Activated CD4-positive, alpha-beta memory T cell treated with anti-CD3 and anti-CD28 coated beads for 36 hours (primary cell): ENCODE measurements at regions of chr10 and their contacts with region 1.

Region 1: DNA sequence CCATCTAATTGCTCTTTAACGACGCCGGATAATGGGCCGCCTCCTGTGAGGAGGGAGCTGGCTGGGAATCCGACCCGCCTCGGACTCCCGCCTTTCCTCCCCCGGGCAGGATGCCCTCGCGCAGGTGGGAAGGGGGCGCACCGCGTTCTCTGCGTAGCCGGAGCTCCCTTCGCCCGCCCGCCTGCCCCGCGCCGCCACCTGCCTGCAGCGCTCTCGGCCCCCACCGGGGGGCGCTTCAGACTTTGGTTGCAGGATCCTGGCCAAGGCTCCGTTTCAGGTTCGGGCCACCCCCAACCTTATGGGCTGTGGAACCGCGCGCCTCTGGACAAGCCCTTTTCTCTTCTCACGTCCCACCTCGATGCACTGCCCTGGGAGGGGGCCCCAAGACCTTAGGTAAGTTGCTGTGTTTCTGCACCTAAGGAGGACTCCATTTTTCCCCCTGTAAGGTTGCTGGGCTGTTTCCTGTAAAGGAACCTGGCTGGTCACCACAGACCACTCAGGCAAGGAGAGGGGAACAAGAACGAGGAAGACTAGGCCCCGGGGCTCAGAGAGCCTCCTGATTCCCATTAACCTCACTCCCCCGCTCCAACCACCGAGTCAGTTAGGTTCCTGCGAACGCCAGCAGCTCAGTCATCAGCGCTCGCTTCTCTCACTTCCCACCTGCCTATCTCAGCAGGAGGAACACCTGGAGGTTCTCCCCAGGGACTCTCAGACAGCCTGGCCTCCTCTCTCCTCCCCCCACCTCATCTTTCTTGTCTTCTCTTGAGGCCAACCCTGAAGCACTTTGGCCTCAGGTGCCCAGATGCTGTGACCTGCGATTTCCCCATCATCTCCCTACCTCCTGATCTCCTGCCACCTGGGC is 11.3 kb upstream of the KAZALD1 start:
- DNase-seq: peak; percentile 84
- H3K4me3 Mint-ChIP-seq: no peak overlapping the region
- H3K27ac Mint-ChIP-seq: no peak overlapping the region
- H3K4me1 Mint-ChIP-seq: peaks cover 15% of the 10 kb centered on the region
- H3K27me3 Mint-ChIP-seq: peaks cover 47% of the 10 kb centered on the region

Region 2: GRCh38 chr10:100728928-100729861 is 321.2 kb before region 1 on chr10:
- CTCF ChIA-PET with region 1: no interaction called
- POLR2A ChIA-PET with region 1: no interaction called
- intact Hi-C with region 1: no loop called
- DNase-seq: peak; percentile 63
- H3K4me3 Mint-ChIP-seq: no peak overlapping the region
- H3K27ac Mint-ChIP-seq: no peak overlapping the region
- H3K4me1 Mint-ChIP-seq: peaks cover 20% of the 10 kb centered on the region
- H3K27me3 Mint-ChIP-seq: peaks cover 80% of the 10 kb centered on the region

Region 3: DNA sequence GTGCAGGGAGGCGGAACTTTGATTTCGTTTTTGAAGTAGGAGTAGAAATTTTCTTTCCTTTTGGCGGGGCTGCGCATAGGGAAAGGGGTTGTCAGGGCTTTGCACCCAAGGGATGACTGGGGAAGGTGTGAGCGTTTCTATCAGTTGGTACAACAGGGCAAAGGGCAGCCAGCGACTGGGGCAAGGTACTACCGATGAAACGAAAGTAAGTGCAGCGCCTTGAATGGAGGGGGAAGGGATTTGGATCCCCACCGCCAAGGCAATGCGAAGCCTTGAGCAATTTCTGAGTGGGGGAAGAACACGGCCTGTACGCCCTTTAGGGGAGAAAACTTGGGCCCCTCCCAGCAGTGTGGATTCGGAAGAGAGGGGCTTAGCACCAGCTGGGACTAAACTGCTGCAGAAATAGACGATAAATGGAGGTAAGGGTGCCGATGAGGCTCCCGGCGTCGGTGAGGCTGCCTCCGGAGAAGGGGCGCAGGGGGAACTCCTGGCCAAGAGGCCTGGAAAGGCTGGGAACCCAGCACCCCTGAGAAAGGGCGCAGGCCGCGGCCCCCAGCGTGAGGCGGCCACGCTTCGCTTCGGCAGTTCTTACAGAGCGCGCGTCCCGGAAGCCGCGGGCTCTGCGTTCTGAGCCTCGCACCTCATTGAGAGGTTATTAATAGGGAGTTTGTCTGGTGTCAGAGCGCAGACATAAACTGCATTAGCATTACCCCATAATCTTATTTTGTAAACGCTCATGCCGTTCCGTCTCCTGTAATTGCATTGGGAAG is 70.6 kb after region 1 on chr10:
- CTCF ChIA-PET with region 1: interaction called, 11 read pairs
- POLR2A ChIA-PET with region 1: no interaction called
- intact Hi-C with region 1: no loop called
- DNase-seq: peak; percentile 55
- H3K4me3 Mint-ChIP-seq: peak overlapping the region; percentile 84
- H3K27ac Mint-ChIP-seq: no peak overlapping the region
- H3K4me1 Mint-ChIP-seq: peaks cover 31% of the 10 kb centered on the region
- H3K27me3 Mint-ChIP-seq: peaks cover 51% of the 10 kb centered on the region

Region 4: DNA sequence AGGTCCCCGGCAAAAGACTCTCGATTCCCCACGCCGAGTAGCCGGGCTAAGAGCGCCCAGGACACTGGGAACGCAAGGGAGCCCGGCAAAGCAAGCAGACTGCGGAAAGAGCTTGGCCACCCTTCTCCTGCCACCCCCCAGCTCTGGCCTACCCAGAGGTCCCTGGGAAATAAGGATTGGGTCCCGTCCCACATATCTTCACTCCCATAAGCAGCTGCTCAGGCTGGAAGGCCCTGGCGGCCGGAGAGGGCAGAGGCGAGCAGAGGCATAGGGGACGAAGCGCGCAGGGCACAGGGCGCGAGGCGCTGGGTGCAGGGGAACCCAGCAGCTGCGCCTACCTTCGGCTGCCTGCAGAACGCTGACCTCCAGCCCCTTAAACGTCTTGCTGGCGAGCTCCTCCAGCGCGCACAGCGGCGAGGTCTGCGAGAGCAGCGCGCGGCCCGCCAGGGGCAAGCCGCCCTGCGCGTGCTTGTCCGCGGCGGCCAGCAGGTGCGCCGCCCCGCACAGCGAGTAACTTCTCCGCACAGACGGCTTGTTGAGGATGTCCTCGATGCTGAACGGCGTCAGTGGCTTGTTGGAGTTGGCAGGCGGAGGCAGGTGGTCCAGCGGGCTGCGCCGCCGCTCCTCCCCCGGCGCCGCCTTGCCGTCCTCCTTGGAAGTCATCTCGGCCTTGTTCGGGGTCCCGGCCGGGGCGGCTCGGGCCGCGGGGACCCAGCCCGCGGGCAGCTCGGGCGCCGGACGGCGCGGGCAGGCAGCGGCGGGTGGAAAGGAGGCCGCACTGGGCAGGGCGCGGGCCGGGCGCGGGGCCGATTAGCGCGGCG is 177.9 kb after region 1 on chr10:
- CTCF ChIA-PET with region 1: no interaction called
- POLR2A ChIA-PET with region 1: no interaction called
- intact Hi-C with region 1: loop called (anchors 5 kb)
- DNase-seq: no peak
- H3K4me3 Mint-ChIP-seq: peak overlapping the region; percentile 3
- H3K27ac Mint-ChIP-seq: no peak overlapping the region
- H3K4me1 Mint-ChIP-seq: peaks cover 35% of the 10 kb centered on the region
- H3K27me3 Mint-ChIP-seq: peaks cover 68% of the 10 kb centered on the region